HepG2 (cell line): ENCODE measurements at regions of chr1 and their contacts with region 1.

Region 1: DNA sequence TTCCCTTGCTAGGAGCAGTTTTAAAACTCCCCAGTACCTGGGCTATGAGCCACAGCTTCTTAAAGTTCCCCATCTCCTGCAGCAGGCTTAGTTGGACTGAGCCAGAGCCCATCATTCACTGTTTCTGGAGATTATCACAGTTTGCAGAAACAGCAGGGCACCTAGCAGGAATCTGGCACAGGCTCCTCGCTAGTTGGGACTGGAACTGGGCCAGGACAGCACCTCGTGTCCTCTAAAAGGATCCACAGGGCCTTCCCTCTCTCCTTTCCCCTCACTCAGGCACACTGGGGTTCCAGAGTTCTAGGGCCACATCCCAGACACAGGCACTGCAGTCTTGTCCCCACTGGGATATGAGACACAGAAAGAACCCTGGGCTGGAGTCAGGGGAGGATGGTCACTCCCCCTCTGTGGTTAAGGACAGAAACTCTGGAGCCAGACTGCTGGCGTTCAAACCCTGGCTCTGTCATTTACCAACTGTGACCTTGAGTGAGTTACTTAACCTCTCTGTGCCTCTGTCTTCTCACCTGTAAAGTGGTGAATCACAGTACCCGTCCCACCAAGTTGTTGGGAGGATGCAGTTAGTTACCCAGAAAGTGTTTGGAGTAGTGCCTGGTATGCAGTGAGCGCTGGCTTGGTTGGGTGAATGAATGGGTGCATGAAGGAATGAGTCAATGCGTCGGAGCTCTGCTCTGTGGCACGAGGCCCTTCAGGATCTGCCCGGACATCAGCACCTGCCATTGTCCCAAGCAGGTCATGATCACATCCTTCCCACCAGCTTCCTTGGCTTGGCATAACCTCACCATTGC is 18.8 kb upstream of the ECE1 start:
- DNase-seq: no peak
- ATAC-seq: no peak
- H3K4me3 ChIP-seq: no peak overlapping the region
- H3K27ac ChIP-seq: no peak overlapping the region
- H3K4me1 ChIP-seq: peaks cover 33% of the 10 kb centered on the region
- H3K27me3 ChIP-seq: no peaks in the 10 kb centered on the region
- CTCF ChIP-seq: no peak
- EP300 ChIP-seq: no peak
- POLR2A ChIP-seq: no peak
- RAD21 ChIP-seq: no peak

Region 2: GRCh38 chr1:21324368-21325141 is 15.5 kb after region 1 on chr1:
- CTCF ChIA-PET with region 1: no interaction called
- POLR2A ChIA-PET with region 1: interaction called, 13 read pairs
- in situ Hi-C with region 1: no loop called
- intact Hi-C with region 1: no loop called
- DNase-seq: no peak
- ATAC-seq: peak; percentile 54
- H3K4me3 ChIP-seq: peak overlapping the region in 1 of 3 experiments; percentile 12; a peak in 1 of 6 replicates
- H3K27ac ChIP-seq: peak overlapping the region; percentile 37
- H3K4me1 ChIP-seq: peaks cover 100% of the 10 kb centered on the region
- H3K27me3 ChIP-seq: no peaks in the 10 kb centered on the region
- CTCF ChIP-seq: no peak
- EP300 ChIP-seq: no peak; a peak in 1 of 4 replicates
- POLR2A ChIP-seq: no peak
- RAD21 ChIP-seq: no peak

Region 3: DNA sequence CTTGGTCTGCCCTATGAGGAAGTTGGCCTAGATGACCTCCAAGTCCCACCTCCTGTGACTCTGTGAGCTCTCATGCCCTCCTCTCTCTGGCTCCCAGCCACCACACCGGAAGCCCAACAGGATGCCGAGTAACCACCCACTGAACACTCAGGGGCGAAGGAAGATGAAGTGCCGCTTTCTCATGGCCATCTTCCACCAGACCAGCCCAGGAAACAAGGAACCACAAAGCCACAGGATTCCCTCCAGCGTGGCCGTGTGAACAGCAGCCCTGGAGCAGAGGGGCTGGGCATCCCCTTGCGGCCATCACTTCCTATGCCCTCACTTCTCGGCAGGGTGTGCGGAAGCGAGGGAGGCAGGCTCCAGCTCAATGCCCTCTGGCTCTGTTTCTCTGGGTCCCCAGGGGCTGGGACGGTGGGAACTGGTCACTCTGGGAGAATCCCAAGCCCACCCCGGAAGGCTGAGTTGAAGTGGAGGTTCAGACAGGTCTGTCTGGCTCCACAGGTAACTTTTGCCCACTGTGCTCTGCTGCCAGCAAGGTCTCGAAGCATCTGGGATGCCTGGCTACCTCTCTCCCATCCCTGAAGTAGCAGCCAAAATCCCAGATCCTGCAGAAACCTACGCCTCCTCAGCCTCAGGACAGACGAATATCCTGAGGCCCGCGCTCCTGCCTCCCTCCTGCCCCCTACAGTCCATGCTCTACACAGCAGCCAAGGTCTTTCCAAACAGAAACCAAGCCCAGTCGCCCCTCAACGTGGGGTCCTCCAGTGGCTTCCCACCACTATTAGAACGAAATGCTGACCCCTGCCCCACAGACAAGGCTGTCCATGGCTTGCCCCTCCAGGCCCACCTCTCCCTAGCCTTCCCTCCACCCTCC is 25.4 kb after region 1 on chr1:
- CTCF ChIA-PET with region 1: no interaction called
- POLR2A ChIA-PET with region 1: interaction called, 10 read pairs
- in situ Hi-C with region 1: no loop called
- intact Hi-C with region 1: no loop called
- DNase-seq: no peak
- ATAC-seq: peak; percentile 46
- H3K4me3 ChIP-seq: peak overlapping the region; percentile 62 to 78 (median 69)
- H3K27ac ChIP-seq: peak overlapping the region; percentile 25
- H3K4me1 ChIP-seq: peaks cover 94% of the 10 kb centered on the region
- H3K27me3 ChIP-seq: no peaks in the 10 kb centered on the region
- CTCF ChIP-seq: peak; percentile 87
- EP300 ChIP-seq: no peak
- POLR2A ChIP-seq: no peak
- RAD21 ChIP-seq: peak; percentile 61; the same call in 1 of the 2 replicates